WTC11 (cell line): ENCODE measurements at regions of chr5 and their contacts with region 1.

Region 1: GRCh38 chr5:62460578-62460983 is 48.0 kb downstream of the IPO11 start:
- DNase-seq: no peak
- ATAC-seq: peak; percentile 85
- H3K4me3 Mint-ChIP-seq: no peak overlapping the region
- H3K27ac Mint-ChIP-seq: no peak overlapping the region; the same call in 1 of the 2 replicates
- H3K4me1 Mint-ChIP-seq: peaks cover 16% of the 10 kb centered on the region
- H3K27me3 Mint-ChIP-seq: no peaks in the 10 kb centered on the region
- CTCF ChIP-seq: peak; percentile 58; the same call in 1 of the 2 replicates

Region 2: GRCh38 chr5:62431735-62432620 is 28.6 kb before region 1 on chr5:
- CTCF ChIA-PET with region 1: interaction called, 14 read pairs
- POLR2A ChIA-PET with region 1: no interaction called
- DNase-seq: no peak
- ATAC-seq: peak; percentile 39; the same call in 1 of the 2 replicates
- H3K4me3 Mint-ChIP-seq: no peak overlapping the region
- H3K27ac Mint-ChIP-seq: peak overlapping the region; percentile 19
- H3K4me1 Mint-ChIP-seq: no peaks in the 10 kb centered on the region
- H3K27me3 Mint-ChIP-seq: no peaks in the 10 kb centered on the region
- CTCF ChIP-seq: no peak

Region 3: DNA sequence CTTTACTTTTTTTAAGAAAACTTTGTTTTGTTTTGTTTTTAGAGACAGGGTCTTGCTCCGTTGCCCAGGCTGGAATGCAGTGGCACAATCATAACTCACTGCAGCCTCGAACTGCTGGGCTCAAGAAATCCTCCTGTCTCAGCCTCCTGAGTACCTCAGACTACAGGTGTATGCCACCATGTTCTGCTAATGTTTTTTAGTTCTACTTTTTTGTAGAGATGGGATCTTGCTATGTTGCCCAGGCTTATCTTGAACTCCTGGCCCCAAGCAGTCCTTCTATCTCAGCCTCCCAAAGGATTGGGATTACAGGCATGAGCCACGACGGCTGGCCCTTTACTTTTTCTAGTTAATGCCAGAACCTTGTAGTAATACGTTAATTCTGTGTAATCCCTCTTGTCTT is 12.1 kb before region 1 on chr5:
- CTCF ChIA-PET with region 1: interaction called, 15 read pairs
- POLR2A ChIA-PET with region 1: no interaction called
- DNase-seq: no peak
- ATAC-seq: no peak
- H3K4me3 Mint-ChIP-seq: no peak overlapping the region
- H3K27ac Mint-ChIP-seq: no peak overlapping the region
- H3K4me1 Mint-ChIP-seq: no peaks in the 10 kb centered on the region
- H3K27me3 Mint-ChIP-seq: no peaks in the 10 kb centered on the region
- CTCF ChIP-seq: no peak

Region 4: GRCh38 chr5:62779010-62779422 is 318.4 kb after region 1 on chr5:
- CTCF ChIA-PET with region 1: interaction called, 30 read pairs
- POLR2A ChIA-PET with region 1: interaction called, 5 read pairs
- DNase-seq: peak; percentile 12
- ATAC-seq: peak; percentile 88
- H3K4me3 Mint-ChIP-seq: no peak overlapping the region
- H3K27ac Mint-ChIP-seq: no peak overlapping the region
- H3K4me1 Mint-ChIP-seq: no peaks in the 10 kb centered on the region
- H3K27me3 Mint-ChIP-seq: no peaks in the 10 kb centered on the region; the same call in 1 of the 2 replicates
- CTCF ChIP-seq: peak; percentile 38; the same call in 1 of the 2 replicates